Activated CD4-positive, alpha-beta memory T cell treated with anti-CD3 and anti-CD28 coated beads for 36 hours (primary cell): ENCODE measurements at regions of chr18 and their contacts with region 1.

Region 1: GRCh38 chr18:9971313-9971920 is 57.6 kb downstream of the VAPA start:
- DNase-seq: peak; percentile 73
- H3K4me3 Mint-ChIP-seq: no peak overlapping the region
- H3K27ac Mint-ChIP-seq: peak overlapping the region; percentile 9
- H3K4me1 Mint-ChIP-seq: peaks cover 10% of the 10 kb centered on the region
- H3K27me3 Mint-ChIP-seq: peaks cover 34% of the 10 kb centered on the region

Region 2: DNA sequence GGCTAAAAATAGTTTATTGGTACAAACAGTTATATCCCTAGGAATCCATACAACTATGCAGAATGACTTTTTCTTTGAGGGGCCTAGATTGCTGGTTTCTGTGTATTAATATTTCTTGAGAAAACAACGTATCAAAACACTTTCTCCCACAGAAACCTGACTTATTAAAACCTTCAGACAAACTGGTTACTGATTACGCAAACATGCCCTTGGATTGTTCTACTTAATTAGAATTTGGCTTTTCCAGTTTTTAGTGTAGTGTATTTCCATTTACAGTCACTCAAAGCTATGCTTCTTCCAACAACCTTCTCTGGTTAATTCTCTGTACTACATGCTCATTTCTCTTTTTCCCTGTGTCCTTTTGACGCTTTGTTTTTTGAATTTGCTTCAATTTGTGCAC is 37.6 kb before region 1 on chr18:
- CTCF ChIA-PET with region 1: no interaction called
- POLR2A ChIA-PET with region 1: no interaction called
- intact Hi-C with region 1: no loop called
- DNase-seq: no peak
- H3K4me3 Mint-ChIP-seq: no peak overlapping the region
- H3K27ac Mint-ChIP-seq: no peak overlapping the region
- H3K4me1 Mint-ChIP-seq: peaks cover 21% of the 10 kb centered on the region
- H3K27me3 Mint-ChIP-seq: no peaks in the 10 kb centered on the region

Region 3: GRCh38 chr18:9987931-9988330 is 16.5 kb after region 1 on chr18:
- CTCF ChIA-PET with region 1: no interaction called
- POLR2A ChIA-PET with region 1: no interaction called
- intact Hi-C with region 1: no loop called
- DNase-seq: no peak
- H3K4me3 Mint-ChIP-seq: no peak overlapping the region
- H3K27ac Mint-ChIP-seq: no peak overlapping the region
- H3K4me1 Mint-ChIP-seq: no peaks in the 10 kb centered on the region
- H3K27me3 Mint-ChIP-seq: peaks cover 22% of the 10 kb centered on the region

Region 4: DNA sequence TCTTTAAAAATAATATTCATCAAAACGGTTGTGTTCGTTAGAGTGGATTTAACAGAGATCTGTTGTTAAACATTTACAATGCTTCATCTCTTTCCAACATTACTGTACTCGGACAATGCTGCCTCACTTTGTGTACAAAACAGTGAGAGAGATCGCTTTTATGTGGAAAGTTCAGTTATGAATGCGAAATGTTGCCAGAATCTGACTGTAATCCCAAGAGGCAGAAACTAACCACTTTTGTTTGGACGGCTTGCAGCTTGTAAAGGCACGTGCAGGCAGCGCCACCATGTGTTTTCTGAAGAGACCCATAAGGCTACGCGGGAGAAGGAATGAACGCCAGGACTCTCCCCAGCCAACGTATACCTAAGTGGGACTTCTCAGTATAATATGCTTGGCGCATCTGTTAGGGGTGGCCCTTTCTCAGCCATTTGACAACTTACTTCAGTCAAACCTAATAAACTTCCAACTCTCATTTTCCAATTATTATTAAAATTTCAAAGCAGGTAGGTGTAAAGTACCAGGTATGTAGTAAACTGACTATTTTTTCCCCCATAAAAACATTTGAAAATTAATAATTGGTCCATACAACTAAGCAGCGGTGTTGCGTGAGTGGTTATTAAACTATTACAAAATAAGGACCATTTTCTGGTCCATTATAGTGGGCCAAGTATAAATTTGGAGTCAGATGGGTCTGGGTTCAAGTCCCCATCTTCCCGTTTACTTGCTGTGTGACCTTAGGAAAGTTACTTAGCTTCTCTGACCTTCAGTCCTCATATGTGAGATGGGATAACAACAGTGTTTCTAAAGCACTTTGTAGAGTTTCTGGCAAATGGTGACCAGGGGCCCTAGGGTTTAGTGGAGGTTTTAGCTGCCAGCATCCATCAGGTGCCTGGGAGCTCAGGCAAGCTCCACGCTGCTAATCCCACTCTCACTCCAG is 548.9 kb after region 1 on chr18:
- CTCF ChIA-PET with region 1: interaction called, 79 read pairs
- POLR2A ChIA-PET with region 1: no interaction called
- intact Hi-C with region 1: loop called (anchors 1 kb)
- DNase-seq: peak; percentile 75
- H3K4me3 Mint-ChIP-seq: no peak overlapping the region
- H3K27ac Mint-ChIP-seq: no peak overlapping the region
- H3K4me1 Mint-ChIP-seq: peaks cover 18% of the 10 kb centered on the region
- H3K27me3 Mint-ChIP-seq: peaks cover 38% of the 10 kb centered on the region